Posterior vena cava (tissue), 2 donors: ENCODE measurements at regions of chr14 and their contacts with region 1.

Region 1: DNA sequence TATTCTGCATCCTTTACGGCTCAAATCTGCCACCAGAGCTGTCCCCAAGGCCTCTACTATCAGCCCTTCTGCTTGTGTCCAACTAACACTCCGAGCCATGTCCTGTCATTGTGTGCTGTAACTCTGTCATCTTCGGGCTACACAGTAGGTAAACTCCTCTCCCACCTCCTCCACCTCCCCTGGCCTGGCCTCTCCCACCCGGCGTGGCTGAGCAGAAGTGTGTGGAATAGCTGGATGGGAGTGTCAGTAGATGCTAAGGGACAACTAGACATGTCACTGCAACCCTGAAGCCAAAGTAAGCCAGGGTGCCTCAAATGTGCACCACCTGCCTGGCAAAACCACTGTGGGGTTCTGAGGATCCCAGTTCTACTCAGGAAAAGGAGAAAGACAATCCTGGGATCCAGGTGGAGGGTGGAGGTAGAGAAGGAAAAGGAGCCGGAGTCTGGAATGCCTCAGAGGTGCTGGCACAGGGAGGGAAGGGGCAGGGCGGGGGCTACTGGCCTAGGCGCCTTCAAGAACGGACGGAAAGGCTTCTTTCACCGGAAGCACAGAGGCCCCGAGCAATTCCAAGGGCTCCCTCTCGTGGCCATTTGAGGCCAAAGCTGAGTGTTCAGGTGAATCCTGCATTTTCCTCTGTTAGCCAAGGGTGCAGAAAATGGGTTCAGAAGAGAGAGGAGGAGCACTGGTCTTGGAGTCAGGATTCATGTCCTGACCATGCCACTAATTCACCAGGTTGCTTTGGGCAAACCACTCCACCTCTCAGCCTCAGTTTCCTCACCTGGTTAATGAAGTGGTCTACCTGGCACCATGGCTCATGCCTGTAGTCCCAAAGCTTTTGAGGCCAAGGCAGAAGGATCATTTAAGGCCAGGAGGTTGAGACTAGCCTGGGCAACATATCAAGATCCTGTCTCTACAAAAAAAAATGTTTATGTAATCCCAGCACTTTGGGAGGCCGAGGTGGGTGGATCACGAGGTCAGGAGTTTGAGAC is 20.5 kb upstream of the FAM181A start:
- DNase-seq: no peak

Region 2: DNA sequence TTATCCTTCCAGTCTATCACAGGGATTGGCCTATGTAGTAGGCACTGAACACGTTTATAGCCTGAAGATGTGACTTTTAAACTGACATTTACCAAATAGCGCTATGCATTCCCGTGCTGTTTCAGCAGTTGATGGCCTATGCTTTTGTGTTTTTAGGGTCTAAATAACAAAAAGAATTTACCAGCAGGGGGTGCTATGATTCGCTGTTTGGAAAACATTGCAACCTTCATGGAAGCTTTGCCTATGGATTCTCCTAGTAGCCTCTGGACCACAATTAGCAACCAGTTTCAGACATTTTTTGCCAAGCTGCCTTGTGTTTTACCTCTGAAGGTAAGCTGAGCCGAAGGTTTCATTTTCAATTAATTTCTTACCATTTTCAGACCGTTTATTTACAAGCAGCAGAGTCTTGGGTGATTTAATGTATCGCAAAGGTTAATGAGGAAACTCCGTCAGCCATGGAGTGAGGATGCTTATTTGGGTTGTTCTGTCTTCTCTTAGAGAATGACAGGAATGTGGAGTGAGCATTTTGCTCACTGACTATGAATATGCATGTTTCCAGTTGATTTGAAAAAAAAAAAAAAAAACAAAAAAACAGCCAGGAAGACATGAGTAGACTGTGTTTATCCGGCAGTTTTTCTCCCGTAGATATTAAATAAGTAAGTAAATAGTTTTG is 251.4 kb before region 1 on chr14:
- intact Hi-C with region 1: loop called (anchors 1 to 5 kb)
- DNase-seq: no peak

Region 3: DNA sequence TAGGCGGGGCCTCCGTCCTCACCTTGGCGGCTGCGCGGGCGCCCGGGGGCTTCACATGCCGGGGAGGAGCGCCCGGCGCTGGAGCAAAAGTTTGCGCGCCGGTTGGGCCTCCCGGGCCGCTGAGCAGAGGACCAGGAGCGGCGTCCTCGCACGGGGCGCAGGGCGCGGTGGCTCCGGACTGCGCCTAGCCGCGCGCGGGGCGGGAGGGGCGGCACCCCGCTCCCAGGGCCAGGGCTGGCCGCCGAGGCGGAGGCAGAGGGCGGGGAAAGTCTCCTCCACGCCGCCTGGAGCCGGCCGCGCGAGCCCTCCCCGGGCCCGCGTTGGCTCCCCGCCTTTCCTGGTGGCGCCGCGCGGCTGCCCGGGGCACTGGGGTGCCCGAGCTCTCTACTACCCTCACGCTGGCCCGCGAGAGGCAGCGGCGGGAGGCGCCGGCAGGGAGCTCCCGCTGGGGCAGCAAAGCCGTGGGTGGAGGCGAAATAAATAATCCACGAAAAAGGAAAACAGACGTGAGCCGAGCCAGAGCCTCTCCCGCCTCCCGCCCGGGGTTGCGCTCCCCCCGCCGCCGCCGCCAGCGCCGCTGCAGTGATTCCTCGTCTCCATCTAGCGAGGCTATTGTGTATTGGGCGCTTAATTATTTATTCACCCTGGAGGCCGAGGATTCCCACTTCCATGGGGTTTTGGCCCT is 118.0 kb before region 1 on chr14:
- intact Hi-C with region 1: loop called in 1 of 2 experiments (anchors 5 kb)
- DNase-seq: no peak

Region 4: GRCh38 chr14:95527387-95528002 is 1620.9 kb after region 1 on chr14:
- intact Hi-C with region 1: loop called in 1 of 2 experiments (anchors 5 kb)
- DNase-seq: no peak